HCT116 (cell line): ENCODE measurements at regions of chr15 and their contacts with region 1.

Region 1: GRCh38 chr15:64209680-64210334 is 47.0 kb upstream of the PPIB start:
- DNase-seq: peak; percentile 33
- ATAC-seq: peak; percentile 66
- H3K4me3 ChIP-seq: no peak overlapping the region
- H3K27ac ChIP-seq: no peak overlapping the region
- H3K4me1 ChIP-seq: peaks cover 0 to 5% of the 10 kb centered on the region in 2 experiments; a peak in 1 of 4 replicates
- H3K27me3 ChIP-seq: no peaks in the 10 kb centered on the region
- CTCF ChIP-seq: peak; percentile 35 to 76 (median 58); a peak in 5 of 6 replicates
- POLR2A ChIP-seq: no peak
- RAD21 ChIP-seq: peak; percentile 80

Region 2: DNA sequence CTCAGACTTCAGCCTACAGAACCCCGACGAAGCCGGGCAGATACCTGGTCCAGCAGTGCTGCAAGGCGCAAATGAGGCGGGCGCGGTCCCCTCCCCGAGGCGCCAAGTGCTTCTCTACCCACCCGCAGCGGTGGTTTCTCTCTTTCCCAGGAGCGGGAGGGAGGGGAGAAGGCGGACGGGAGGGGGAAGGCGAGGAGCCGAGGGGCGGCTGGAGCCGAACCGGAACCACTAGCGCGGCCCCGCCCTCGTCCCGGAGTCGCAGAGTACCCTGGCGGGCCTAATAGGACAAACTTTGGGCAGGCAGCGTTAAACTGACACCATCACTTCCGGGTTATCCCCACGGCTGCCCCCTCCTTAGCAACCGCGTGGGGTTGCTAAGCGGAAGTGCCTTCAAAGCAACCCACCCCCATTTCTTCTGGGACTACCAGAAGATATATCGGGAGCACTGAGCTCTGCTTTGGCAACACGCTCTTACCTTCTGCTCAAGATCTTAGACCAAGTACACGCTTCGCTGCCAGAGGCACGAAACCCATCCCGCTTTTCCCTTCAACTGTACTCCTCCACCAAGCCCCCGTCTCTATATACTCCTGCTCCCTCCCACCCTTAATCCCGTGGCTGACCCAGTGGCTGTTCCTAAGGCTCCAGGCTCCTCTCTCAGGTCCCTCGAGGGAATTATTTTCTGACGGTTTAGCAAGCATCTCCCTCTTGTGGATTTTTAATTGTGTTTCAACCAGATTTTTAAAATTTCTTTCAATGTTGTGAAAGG is 146.3 kb after region 1 on chr15 and contains the start of gene CSNK1G1:
- CTCF ChIA-PET with region 1: interaction called, 6 read pairs
- POLR2A ChIA-PET with region 1: no interaction called
- RAD21 ChIA-PET with region 1: no interaction called
- intact Hi-C with region 1: loop called (anchors 1 kb)
- DNase-seq: peak; percentile 91
- ATAC-seq: peak; percentile 95
- H3K4me3 ChIP-seq: peak within 1 kb of the TSS; percentile 78 to 93
- H3K27ac ChIP-seq: peak within 1 kb of the TSS; percentile 77
- H3K4me1 ChIP-seq: peaks cover 9 to 19% of the 10 kb centered on the region in 2 experiments; a peak in 3 of 4 replicates
- H3K27me3 ChIP-seq: no peaks in the 10 kb centered on the region
- CTCF ChIP-seq: peak; percentile 21 to 87 (median 51); a peak in 4 of 6 replicates
- POLR2A ChIP-seq: no peak
- RAD21 ChIP-seq: peak; percentile 70
- total RNA-seq, gene CSNK1G1: 21.1 TPM

Region 3: GRCh38 chr15:64412216-64412615 is 202.4 kb after region 1 on chr15:
- CTCF ChIA-PET with region 1: no interaction called
- POLR2A ChIA-PET with region 1: no interaction called
- RAD21 ChIA-PET with region 1: no interaction called
- intact Hi-C with region 1: no loop called
- DNase-seq: no peak
- ATAC-seq: no peak
- H3K4me3 ChIP-seq: no peak overlapping the region
- H3K27ac ChIP-seq: no peak overlapping the region
- H3K4me1 ChIP-seq: no peaks in the 10 kb centered on the region
- H3K27me3 ChIP-seq: no peaks in the 10 kb centered on the region
- CTCF ChIP-seq: no peak
- POLR2A ChIP-seq: no peak
- RAD21 ChIP-seq: no peak

Region 4: DNA sequence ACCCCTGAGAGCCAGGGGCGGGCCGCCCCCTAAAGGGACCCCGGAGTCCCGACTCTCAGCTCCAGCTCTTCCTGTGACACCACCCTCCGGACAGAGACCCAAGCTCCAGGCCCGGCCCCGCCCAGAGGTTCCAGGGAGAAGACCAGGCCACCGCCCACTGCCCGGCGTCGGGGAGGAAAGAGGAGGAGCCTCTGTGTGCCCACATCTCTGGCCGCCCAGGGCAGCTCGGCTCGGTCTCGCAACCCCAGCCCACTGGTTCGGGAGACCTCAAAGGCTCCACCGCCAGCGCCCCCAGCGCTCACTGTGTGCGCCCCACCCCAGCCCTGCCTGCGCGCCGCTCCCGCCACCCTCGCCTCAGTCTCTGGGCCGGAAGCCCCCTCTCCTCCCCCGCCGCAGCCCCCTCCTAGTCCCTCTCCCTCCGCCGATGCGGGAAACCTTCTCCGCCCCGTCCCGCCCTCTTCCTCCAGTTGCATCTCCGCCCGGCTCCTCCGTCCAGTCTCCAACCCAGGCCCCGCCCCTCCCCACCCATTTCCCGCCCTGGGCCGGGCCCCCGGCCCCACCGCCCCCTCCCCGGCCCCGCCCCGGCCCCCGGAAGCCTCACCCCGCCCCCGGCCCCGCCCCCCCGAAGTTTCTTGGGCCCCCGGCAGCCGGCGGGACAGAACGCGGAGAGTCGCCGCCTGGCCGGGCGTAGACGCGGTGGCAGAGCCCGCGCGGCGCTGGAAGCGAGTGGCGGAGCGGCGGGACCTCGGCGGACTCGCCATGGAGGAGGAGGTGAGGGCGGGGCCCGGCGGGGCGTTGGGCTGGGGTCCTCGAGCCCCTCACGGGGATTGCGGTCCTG is 631.7 kb after region 1 on chr15 and contains the start of gene PLEKHO2:
- CTCF ChIA-PET with region 1: no interaction called
- POLR2A ChIA-PET with region 1: no interaction called
- RAD21 ChIA-PET with region 1: no interaction called
- intact Hi-C with region 1: no loop called
- DNase-seq: peak; percentile 73
- ATAC-seq: peak; percentile 97
- H3K4me3 ChIP-seq: peak within 1 kb of the TSS; percentile 84 to 87
- H3K27ac ChIP-seq: peak within 1 kb of the TSS; percentile 74
- H3K4me1 ChIP-seq: peaks cover 8 to 24% of the 10 kb centered on the region in 2 experiments
- H3K27me3 ChIP-seq: no peaks in the 10 kb centered on the region
- CTCF ChIP-seq: no peak
- POLR2A ChIP-seq: peak; percentile 36
- RAD21 ChIP-seq: no peak
- total RNA-seq, gene PLEKHO2: 8.0 TPM